Activated CD4-positive, alpha-beta T cell treated with anti-CD3 and anti-CD28 coated beads for 36 hours (primary cell): ENCODE measurements at regions of chr1 and their contacts with region 1.

Region 1: DNA sequence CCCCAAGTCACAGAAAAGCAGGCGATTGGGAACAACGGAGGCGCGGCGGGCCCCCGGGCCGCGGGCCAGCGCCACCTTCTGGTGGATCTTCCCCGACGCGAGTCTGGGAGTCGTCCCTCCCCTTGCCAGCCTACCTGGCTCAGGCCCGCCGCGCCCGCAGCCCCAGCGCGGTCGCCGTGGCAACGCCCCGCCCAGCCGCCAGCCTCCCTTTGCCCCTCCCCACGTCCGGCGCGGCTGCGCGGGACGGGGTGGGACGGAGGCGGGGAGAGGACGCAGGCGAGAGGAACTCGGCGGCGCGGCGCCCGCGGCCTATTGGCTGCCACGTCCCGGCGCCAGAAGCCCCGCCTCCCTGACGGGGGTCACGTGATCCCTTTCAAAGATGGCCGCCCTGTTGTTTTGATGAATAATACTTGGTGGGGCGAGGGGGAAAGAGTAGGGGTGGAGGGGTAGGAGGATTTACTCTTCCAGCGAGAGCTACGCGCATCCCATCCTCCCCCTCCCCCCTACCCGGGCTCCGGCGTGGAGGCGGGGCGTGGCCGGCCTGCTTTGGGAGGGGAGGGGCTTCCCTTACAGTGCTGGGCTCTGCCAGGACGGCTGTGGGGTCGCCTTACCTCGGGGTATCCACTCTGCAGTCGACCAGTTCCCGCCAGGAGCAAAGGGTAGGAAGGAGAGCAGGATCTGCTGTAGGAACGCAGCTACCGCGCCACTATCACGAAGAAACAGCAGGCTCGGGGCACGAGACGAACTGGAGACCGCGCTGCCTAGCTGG is at the start of gene UBE4B:
- DNase-seq: peak; percentile 99
- ATAC-seq: peak; percentile 96
- H3K4me3 Mint-ChIP-seq: peak within 1 kb of the TSS; percentile 88
- H3K27ac Mint-ChIP-seq: peak within 1 kb of the TSS; percentile 74
- H3K4me1 Mint-ChIP-seq: peaks cover 24% of the 10 kb centered on the region
- H3K27me3 Mint-ChIP-seq: no peaks in the 10 kb centered on the region
- total RNA-seq, gene UBE4B: 26.1 to 31.8 TPM

Region 2: GRCh38 chr1:9428601-9429341 is 604.0 kb before region 1 on chr1:
- CTCF ChIA-PET with region 1: no interaction called
- POLR2A ChIA-PET with region 1: no interaction called
- intact Hi-C with region 1: loop called in 1 of 2 experiments (anchors 2 kb)
- DNase-seq: peak; percentile 100
- ATAC-seq: peak; percentile 91
- H3K4me3 Mint-ChIP-seq: peak overlapping the region; percentile 86
- H3K27ac Mint-ChIP-seq: peak overlapping the region; percentile 98
- H3K4me1 Mint-ChIP-seq: peaks cover 47% of the 10 kb centered on the region
- H3K27me3 Mint-ChIP-seq: no peaks in the 10 kb centered on the region

Region 3: DNA sequence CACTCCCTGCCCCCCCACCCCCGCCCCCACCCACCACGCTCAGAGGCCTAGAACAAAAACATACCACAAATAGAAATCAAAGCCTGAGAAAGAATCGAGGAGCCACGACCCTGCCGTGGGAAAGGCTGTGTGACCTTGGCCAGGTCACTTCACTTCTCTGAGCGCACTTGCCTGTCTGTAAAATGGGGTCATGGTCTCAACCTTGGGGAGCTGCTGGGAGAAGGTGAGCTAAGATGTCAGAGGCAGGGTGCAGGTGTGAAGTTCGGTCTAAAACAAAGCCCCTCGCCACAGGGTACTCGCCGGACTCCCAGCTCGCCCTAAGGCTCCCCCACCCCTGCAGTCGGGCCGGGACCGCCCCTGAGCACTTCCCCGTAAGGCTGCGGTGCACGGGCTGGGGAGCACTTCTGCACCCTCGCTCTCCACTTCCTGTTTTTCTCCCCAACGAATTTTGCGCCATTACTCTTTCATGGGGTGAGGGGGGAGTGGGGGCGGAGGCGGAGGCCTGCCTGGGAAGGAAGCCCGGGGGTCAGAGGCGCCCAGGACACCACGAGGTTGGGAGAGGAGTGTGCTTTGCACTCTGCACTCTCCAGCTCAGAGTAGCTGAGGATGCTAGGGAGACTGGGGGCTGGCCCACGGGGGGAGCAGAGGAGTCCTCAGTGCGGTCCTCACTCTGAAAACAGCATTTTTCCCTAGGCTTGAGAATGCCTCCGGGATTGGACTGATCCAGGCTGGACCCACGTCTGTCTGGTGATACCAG is 403.2 kb before region 1 on chr1:
- CTCF ChIA-PET with region 1: no interaction called
- POLR2A ChIA-PET with region 1: no interaction called
- intact Hi-C with region 1: loop called in 1 of 2 experiments (anchors 2 kb)
- DNase-seq: peak; percentile 88
- ATAC-seq: peak; percentile 45
- H3K4me3 Mint-ChIP-seq: peak overlapping the region; percentile 87
- H3K27ac Mint-ChIP-seq: peak overlapping the region; percentile 95
- H3K4me1 Mint-ChIP-seq: peaks cover 64% of the 10 kb centered on the region
- H3K27me3 Mint-ChIP-seq: peaks cover 2% of the 10 kb centered on the region

Region 4: GRCh38 chr1:9823943-9824701 is 208.7 kb before region 1 on chr1 and contains the start of gene CLSTN1:
- CTCF ChIA-PET with region 1: no interaction called
- POLR2A ChIA-PET with region 1: no interaction called
- intact Hi-C with region 1: loop called in 1 of 2 experiments (anchors 1 kb)
- DNase-seq: peak; percentile 96
- ATAC-seq: peak; percentile 72
- H3K4me3 Mint-ChIP-seq: peak within 1 kb of the TSS; percentile 96
- H3K27ac Mint-ChIP-seq: peak within 1 kb of the TSS; percentile 89
- H3K4me1 Mint-ChIP-seq: peaks cover 35% of the 10 kb centered on the region
- H3K27me3 Mint-ChIP-seq: peaks cover 9% of the 10 kb centered on the region
- total RNA-seq, gene CLSTN1: 34.9 to 36.7 TPM

Region 5: GRCh38 chr1:10007169-10007568 is 25.6 kb before region 1 on chr1:
- CTCF ChIA-PET with region 1: no interaction called
- POLR2A ChIA-PET with region 1: no interaction called
- intact Hi-C with region 1: no loop called
- DNase-seq: no peak
- ATAC-seq: no peak
- H3K4me3 Mint-ChIP-seq: no peak overlapping the region
- H3K27ac Mint-ChIP-seq: no peak overlapping the region
- H3K4me1 Mint-ChIP-seq: no peaks in the 10 kb centered on the region
- H3K27me3 Mint-ChIP-seq: peaks cover 2% of the 10 kb centered on the region

Region 6: GRCh38 chr1:10170239-10170574 is 137.4 kb after region 1 on chr1:
- CTCF ChIA-PET with region 1: no interaction called
- POLR2A ChIA-PET with region 1: no interaction called
- intact Hi-C with region 1: loop called in 1 of 2 experiments (anchors 1 kb)
- DNase-seq: peak; percentile 48
- ATAC-seq: peak; percentile 89
- H3K4me3 Mint-ChIP-seq: peak overlapping the region; percentile 31
- H3K27ac Mint-ChIP-seq: peak overlapping the region; percentile 93
- H3K4me1 Mint-ChIP-seq: peaks cover 46% of the 10 kb centered on the region
- H3K27me3 Mint-ChIP-seq: no peaks in the 10 kb centered on the region

Region 7: GRCh38 chr1:10430216-10431069 is 397.7 kb after region 1 on chr1 and contains the start of gene CENPS:
- CTCF ChIA-PET with region 1: no interaction called
- POLR2A ChIA-PET with region 1: no interaction called
- intact Hi-C with region 1: loop called in 1 of 2 experiments (anchors 1 kb)
- DNase-seq: peak; percentile 91
- ATAC-seq: peak; percentile 83
- H3K4me3 Mint-ChIP-seq: peak within 1 kb of the TSS; percentile 76
- H3K27ac Mint-ChIP-seq: peak within 1 kb of the TSS; percentile 92
- H3K4me1 Mint-ChIP-seq: peaks cover 22% of the 10 kb centered on the region
- H3K27me3 Mint-ChIP-seq: no peaks in the 10 kb centered on the region
- total RNA-seq, gene CENPS: 18.1 to 22.8 TPM

Region 8: GRCh38 chr1:10530281-10530740 is 497.5 kb after region 1 on chr1:
- CTCF ChIA-PET with region 1: no interaction called
- POLR2A ChIA-PET with region 1: no interaction called
- intact Hi-C with region 1: no loop called
- DNase-seq: peak; percentile 20
- ATAC-seq: no peak
- H3K4me3 Mint-ChIP-seq: no peak overlapping the region
- H3K27ac Mint-ChIP-seq: no peak overlapping the region
- H3K4me1 Mint-ChIP-seq: peaks cover 18% of the 10 kb centered on the region
- H3K27me3 Mint-ChIP-seq: no peaks in the 10 kb centered on the region

Region 9: GRCh38 chr1:11059990-11060830 is 1027.4 kb after region 1 on chr1 and contains the start of gene SRM:
- CTCF ChIA-PET with region 1: no interaction called
- POLR2A ChIA-PET with region 1: no interaction called
- intact Hi-C with region 1: loop called in 1 of 2 experiments (anchors 1 kb)
- DNase-seq: peak; percentile 95
- ATAC-seq: peak; percentile 98
- H3K4me3 Mint-ChIP-seq: peak within 1 kb of the TSS; percentile 93
- H3K27ac Mint-ChIP-seq: peak within 1 kb of the TSS; percentile 94
- H3K4me1 Mint-ChIP-seq: peaks cover 41% of the 10 kb centered on the region
- H3K27me3 Mint-ChIP-seq: no peaks in the 10 kb centered on the region
- total RNA-seq, gene SRM: 180 to 242 TPM